Activated CD4-positive, alpha-beta T cell treated with anti-CD3 and anti-CD28 coated beads, Interleukin-2, amount 10 ng/mL, durations not matched to agents 7 days and 5 days (primary cell): ENCODE measurements at regions of chr17 and their contacts with region 1.

Region 1: DNA sequence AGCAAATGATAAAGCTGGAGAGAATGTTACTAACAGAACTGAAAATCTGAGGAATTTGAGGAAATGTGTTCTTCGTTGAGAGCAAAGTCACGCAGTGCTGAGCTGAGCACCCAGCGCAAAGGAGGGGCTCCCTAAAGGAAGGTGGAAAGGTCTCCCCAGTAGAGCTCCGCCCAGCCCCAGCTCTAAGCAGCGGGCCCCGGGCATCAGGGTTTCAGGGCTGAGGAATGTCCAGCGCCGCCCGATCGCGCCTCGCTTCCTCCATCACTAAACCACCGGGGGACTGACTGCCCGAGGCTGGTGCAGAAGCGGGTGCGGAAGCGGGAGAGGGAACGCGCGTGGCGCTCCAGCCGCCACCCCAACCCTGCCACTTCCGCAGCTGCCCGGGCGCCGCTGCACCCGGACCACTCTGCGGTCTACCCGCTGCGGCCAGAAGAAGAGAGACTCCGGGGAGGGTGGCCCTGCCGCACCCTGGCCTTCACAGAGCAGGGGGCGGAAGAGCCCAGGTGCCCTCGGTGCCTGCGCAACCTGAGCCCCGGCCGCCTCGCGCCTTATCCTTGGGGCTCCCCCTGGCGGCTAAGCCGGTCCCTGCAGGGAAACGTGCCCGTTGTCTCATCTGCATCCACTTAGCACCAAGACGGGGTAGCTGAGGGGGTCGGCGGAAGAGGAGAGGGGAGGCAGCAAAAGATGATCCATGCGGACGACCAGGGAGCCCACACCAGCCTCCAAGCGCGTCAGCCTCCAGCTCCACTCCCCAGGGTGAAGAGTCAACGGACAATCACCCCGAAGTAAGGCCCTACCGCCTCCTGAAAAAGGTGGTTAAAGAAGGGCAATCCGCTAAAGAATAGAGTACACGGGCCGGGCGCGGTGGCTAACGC is 12.4 kb upstream of the GUCY2D start:
- DNase-seq: peak; percentile 92
- H3K4me3 Mint-ChIP-seq: peak overlapping the region; percentile 75
- H3K27ac Mint-ChIP-seq: peak overlapping the region; percentile 94
- H3K4me1 Mint-ChIP-seq: peaks cover 35% of the 10 kb centered on the region
- H3K27me3 Mint-ChIP-seq: peaks cover 6% of the 10 kb centered on the region

Region 2: GRCh38 chr17:7834962-7835813 is 154.8 kb before region 1 on chr17:
- CTCF ChIA-PET with region 1: interaction called, 10 read pairs
- POLR2A ChIA-PET with region 1: no interaction called
- DNase-seq: peak; percentile 92
- H3K4me3 Mint-ChIP-seq: peak overlapping the region; percentile 83
- H3K27ac Mint-ChIP-seq: peak overlapping the region; percentile 91
- H3K4me1 Mint-ChIP-seq: peaks cover 53% of the 10 kb centered on the region
- H3K27me3 Mint-ChIP-seq: peaks cover 1% of the 10 kb centered on the region

Region 3: DNA sequence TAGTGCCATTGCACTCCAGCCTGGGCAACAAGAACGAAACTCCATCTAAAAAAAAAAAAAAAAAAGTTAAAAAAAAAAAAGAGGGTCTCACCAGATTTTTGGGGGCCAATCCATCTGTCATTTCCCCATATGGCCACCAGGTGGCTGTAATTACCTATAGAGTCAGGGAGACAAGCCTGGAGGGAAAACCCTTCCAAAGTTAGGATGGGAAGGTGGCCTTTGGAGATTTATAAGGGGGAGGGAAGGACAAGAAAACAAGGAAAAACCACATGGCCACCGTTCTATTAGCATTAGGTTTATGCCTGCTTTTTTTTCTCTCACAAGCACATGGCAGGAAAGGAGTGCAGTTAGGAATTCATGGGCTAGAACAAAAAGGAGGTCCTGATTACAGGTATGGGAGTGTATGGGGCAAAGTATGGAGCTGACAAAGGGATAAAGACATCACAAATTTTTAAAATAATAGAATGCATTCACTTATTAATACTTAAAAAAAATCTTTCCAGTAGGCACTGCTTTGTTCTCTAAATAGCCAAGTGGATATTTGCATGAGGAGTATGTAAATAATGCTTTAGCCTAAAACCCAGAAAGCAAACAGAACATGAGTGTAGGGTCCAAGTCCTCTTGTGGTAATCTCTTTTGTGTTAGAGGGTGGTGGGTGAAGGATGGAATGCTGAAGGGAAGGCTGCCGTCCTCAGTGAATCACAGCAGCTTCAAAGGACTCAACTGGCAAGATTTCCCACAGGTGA is 127.2 kb before region 1 on chr17:
- CTCF ChIA-PET with region 1: interaction called, 38 read pairs
- POLR2A ChIA-PET with region 1: no interaction called
- DNase-seq: peak; percentile 57
- H3K4me3 Mint-ChIP-seq: no peak overlapping the region
- H3K27ac Mint-ChIP-seq: no peak overlapping the region
- H3K4me1 Mint-ChIP-seq: peaks cover 20% of the 10 kb centered on the region
- H3K27me3 Mint-ChIP-seq: no peaks in the 10 kb centered on the region

Region 4: GRCh38 chr17:7867881-7868329 is 122.1 kb before region 1 on chr17:
- CTCF ChIA-PET with region 1: interaction called, 38 read pairs
- POLR2A ChIA-PET with region 1: no interaction called
- DNase-seq: peak; percentile 42
- H3K4me3 Mint-ChIP-seq: peak overlapping the region; percentile 39
- H3K27ac Mint-ChIP-seq: peak overlapping the region; percentile 65
- H3K4me1 Mint-ChIP-seq: peaks cover 33% of the 10 kb centered on the region
- H3K27me3 Mint-ChIP-seq: no peaks in the 10 kb centered on the region

Region 5: DNA sequence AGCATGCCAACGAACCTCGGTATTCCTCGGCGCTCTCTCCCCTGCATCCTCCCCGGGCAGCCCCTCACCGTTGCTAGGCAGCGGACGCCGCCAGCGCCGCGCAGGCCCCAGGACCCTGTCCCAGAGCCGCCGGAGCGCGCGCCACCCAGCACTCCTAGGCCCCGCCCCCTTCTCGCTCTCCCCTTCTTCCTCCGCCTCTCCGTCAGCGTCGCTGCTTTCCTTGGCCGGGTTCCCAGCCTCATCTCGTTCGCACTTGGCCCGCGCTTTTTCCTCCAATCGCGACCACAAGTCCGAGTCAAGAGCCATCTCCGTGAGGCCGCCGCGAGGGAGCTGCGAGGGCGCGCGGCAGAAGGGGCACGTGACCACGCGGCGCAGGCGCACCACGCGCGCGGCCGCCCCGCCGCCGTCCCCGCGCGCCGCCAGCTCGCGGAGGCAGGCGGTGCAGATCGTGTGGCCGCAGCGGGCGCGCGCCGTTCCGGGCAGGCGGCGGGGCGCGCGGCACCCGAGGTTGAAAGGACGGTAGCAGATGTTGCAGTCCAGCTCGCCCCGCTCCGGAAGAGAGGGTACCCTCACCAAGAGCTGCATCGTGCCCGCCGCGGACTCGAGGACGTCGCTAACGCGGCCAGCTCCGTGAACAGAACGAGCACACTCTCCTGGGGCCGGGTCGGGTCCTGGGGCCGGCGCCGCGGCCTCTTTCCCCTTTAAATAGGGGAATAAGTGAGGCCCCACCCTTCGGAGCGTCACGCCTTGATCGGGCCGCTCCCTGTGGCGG is 74.2 kb before region 1 on chr17 and contains the start of gene RNF227:
- CTCF ChIA-PET with region 1: interaction called, 38 read pairs
- POLR2A ChIA-PET with region 1: interaction called, 4 read pairs
- DNase-seq: peak; percentile 84
- H3K4me3 Mint-ChIP-seq: peak within 1 kb of the TSS; percentile 88
- H3K27ac Mint-ChIP-seq: peak within 1 kb of the TSS; percentile 93
- H3K4me1 Mint-ChIP-seq: peaks cover 38% of the 10 kb centered on the region
- H3K27me3 Mint-ChIP-seq: no peaks in the 10 kb centered on the region
- total RNA-seq, gene RNF227: 4.4 to 4.5 TPM

Region 6: GRCh38 chr17:7977039-7977438 is 13.0 kb before region 1 on chr17:
- CTCF ChIA-PET with region 1: interaction called, 19 read pairs
- POLR2A ChIA-PET with region 1: no interaction called
- DNase-seq: no peak
- H3K4me3 Mint-ChIP-seq: no peak overlapping the region
- H3K27ac Mint-ChIP-seq: no peak overlapping the region
- H3K4me1 Mint-ChIP-seq: no peaks in the 10 kb centered on the region
- H3K27me3 Mint-ChIP-seq: peaks cover 12% of the 10 kb centered on the region

Region 7: GRCh38 chr17:8091033-8091687 is 101.1 kb after region 1 on chr17:
- CTCF ChIA-PET with region 1: no interaction called
- POLR2A ChIA-PET with region 1: no interaction called
- DNase-seq: no peak
- H3K4me3 Mint-ChIP-seq: no peak overlapping the region
- H3K27ac Mint-ChIP-seq: no peak overlapping the region
- H3K4me1 Mint-ChIP-seq: peaks cover 14% of the 10 kb centered on the region
- H3K27me3 Mint-ChIP-seq: peaks cover 30% of the 10 kb centered on the region